ENCODE measurements at regions of chr14 and their contacts with region 1.

Region 1: DNA sequence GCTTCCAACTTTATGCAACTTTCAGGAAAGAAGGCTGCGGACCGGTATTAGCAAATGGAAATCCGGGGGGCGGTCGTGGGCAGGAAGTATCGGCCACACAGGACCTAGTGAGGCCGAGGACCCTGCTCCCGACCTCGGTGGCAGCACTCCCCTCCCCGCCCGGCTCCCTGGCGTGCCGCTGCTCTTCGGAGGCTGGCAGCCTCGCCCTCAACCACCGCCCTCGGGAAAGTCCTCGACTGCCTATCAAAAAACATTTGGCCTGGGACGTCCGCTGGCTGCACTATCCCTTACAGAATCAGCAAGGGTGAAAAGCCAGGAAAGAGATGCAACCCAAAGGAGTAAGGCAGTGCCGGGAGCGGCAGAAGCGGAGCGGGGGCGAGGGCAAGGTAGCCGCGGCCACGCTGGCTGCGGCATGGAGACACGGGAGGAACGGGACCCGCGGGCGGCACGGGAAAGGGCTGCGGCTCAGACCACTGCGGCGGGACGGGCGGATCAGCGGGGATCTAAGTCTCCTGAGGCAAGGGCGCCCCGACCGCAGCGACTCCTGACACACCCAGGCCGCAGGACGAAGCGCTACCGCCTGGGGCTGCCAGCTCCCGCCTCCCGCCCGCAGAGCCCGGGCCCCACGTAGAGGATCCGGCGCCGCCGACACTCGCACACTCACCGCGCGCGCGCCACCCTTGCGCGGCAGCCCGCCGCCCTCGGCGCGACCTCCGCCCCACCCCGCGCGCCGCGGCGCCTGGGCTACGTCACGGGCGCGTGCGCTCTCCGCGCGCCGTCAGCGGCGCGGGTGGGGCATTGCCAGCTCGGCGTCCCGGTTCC is at the starts of genes BBOF1 and ENTPD5:
- DNase-seq: peak; percentile 78
- H3K4me3 Mint-ChIP-seq: peak within 1 kb of the TSS; percentile 96
- H3K27ac Mint-ChIP-seq: peak within 1 kb of the TSS; percentile 96
- H3K4me1 Mint-ChIP-seq: peaks cover 6% of the 10 kb centered on the region
- H3K27me3 Mint-ChIP-seq: no peaks in the 10 kb centered on the region
- CTCF ChIP-seq: no peak
- total RNA-seq, gene BBOF1: 2.0 and 4.2 TPM in 2 replicates
- total RNA-seq, gene ENTPD5: 13.9 and 15.8 TPM in 2 replicates

Region 2: GRCh38 chr14:73949744-73950734 is 68.8 kb before region 1 on chr14 and contains the starts of genes COQ6 and FAM161B:
- CTCF ChIA-PET with region 1: interaction called, 3 read pairs
- POLR2A ChIA-PET with region 1: interaction called, 16 read pairs
- intact Hi-C with region 1: loop called (anchors 2 kb)
- DNase-seq: peak; percentile 97
- H3K4me3 Mint-ChIP-seq: peak within 1 kb of the TSS; percentile 96
- H3K27ac Mint-ChIP-seq: peak within 1 kb of the TSS; percentile 93
- H3K4me1 Mint-ChIP-seq: peaks cover 10% of the 10 kb centered on the region
- H3K27me3 Mint-ChIP-seq: no peaks in the 10 kb centered on the region
- CTCF ChIP-seq: no peak
- total RNA-seq, gene COQ6: 25.0 and 25.5 TPM in 2 replicates
- total RNA-seq, gene FAM161B: 2.1 and 3.0 TPM in 2 replicates

Region 3: GRCh38 chr14:74042296-74042695 is 23.5 kb after region 1 on chr14:
- CTCF ChIA-PET with region 1: no interaction called
- POLR2A ChIA-PET with region 1: no interaction called
- intact Hi-C with region 1: no loop called
- DNase-seq: no peak
- H3K4me3 Mint-ChIP-seq: no peak overlapping the region
- H3K27ac Mint-ChIP-seq: no peak overlapping the region
- H3K4me1 Mint-ChIP-seq: no peaks in the 10 kb centered on the region
- H3K27me3 Mint-ChIP-seq: no peaks in the 10 kb centered on the region
- CTCF ChIP-seq: no peak

Region 4: DNA sequence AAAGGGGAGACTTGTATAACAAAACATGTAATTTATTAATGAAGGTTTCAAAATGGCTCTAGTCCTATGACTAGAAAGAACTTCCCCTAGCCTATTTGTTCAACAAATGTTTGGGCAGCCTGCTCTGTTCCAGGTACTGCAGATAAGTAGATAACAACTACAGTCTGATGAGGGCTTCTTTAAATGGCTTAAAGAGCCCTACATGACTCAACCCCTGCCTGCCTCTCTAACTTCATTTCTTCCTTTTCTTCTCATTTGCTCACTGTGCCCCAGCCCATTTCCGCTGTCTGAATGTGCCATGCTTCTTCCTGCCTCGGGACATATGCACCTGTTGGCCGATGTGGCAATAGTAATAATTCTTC is 44.0 kb after region 1 on chr14:
- CTCF ChIA-PET with region 1: interaction called, 3 read pairs
- POLR2A ChIA-PET with region 1: interaction called, 14 read pairs
- intact Hi-C with region 1: no loop called
- DNase-seq: peak; percentile 59
- H3K4me3 Mint-ChIP-seq: no peak overlapping the region
- H3K27ac Mint-ChIP-seq: peak overlapping the region; percentile 57
- H3K4me1 Mint-ChIP-seq: peaks cover 13% of the 10 kb centered on the region
- H3K27me3 Mint-ChIP-seq: no peaks in the 10 kb centered on the region
- CTCF ChIP-seq: no peak

Region 5: GRCh38 chr14:74084277-74085046 is 65.7 kb after region 1 on chr14 and contains the starts of genes ALDH6A1 and LIN52:
- CTCF ChIA-PET with region 1: interaction called, 3 read pairs
- POLR2A ChIA-PET with region 1: interaction called, 11 read pairs
- intact Hi-C with region 1: loop called (anchors 1 kb)
- DNase-seq: peak; percentile 100
- H3K4me3 Mint-ChIP-seq: peak within 1 kb of the TSS; percentile 93
- H3K27ac Mint-ChIP-seq: peak within 1 kb of the TSS; percentile 99
- H3K4me1 Mint-ChIP-seq: peaks cover 14% of the 10 kb centered on the region
- H3K27me3 Mint-ChIP-seq: no peaks in the 10 kb centered on the region
- CTCF ChIP-seq: no peak
- total RNA-seq, gene ALDH6A1: 22.4 and 28.9 TPM in 2 replicates
- total RNA-seq, gene LIN52: 8.7 and 9.5 TPM in 2 replicates

Measured in MCF 10A (cell line).